ENCODE measurements at regions of chr20 and their contacts with region 1.

Region 1: DNA sequence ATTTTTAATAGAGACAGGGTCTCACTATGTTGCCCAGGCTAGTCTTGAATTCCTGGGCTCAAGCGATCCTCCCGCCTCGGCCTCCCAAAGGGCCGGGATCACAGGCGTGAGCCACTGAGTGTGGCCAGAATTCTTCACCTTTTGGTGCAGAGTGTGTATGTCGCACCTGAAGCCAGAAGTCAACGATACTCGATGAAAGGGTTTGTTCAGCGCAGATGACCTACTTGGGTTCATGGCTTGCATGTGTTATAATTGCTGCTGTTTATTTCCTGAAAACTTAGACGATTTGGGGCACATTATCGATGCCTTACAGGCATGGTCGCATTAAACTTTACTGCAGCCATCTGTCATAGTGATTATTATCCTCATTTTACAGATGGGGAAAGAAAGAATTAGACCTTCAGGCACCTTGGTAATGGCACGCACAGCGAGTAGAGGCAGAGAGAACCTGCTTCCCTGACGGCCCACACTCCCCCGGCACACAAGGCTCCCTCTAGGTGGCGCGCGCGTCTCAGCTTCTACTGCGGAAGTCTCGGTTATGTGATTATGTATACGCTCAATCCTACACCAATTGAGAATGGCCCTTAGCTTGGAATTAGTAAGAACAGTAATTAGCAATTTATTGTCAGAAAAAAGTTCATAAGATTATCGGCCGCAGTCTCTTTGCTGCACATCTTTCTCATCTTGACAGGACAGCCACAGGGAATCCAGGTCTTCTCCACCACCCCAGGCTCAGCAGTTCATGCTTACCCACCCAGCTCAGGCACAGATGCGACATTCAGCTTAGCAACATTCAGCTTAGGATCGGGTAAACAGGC is 212.8 kb upstream of the PROKR2 start:
- DNase-seq: peak; percentile 74
- ATAC-seq: peak; percentile 92
- H3K4me3 Mint-ChIP-seq: peak overlapping the region; percentile 29
- H3K27ac Mint-ChIP-seq: peak overlapping the region; percentile 46
- H3K4me1 Mint-ChIP-seq: peaks cover 11% of the 10 kb centered on the region
- H3K27me3 Mint-ChIP-seq: no peaks in the 10 kb centered on the region
- CTCF ChIP-seq: no peak

Region 2: GRCh38 chr20:5119435-5120188 is 409.9 kb before region 1 on chr20 and contains the start of gene PCNA:
- CTCF ChIA-PET with region 1: no interaction called
- POLR2A ChIA-PET with region 1: no interaction called
- intact Hi-C with region 1: no loop called
- DNase-seq: peak; percentile 91
- ATAC-seq: peak; percentile 95
- H3K4me3 Mint-ChIP-seq: peak within 1 kb of the TSS; percentile 94
- H3K27ac Mint-ChIP-seq: peak within 1 kb of the TSS; percentile 94
- H3K4me1 Mint-ChIP-seq: peaks cover 27% of the 10 kb centered on the region
- H3K27me3 Mint-ChIP-seq: no peaks in the 10 kb centered on the region
- CTCF ChIP-seq: no peak
- total RNA-seq, gene PCNA: 62.0 and 69.9 TPM in 2 replicates

Region 3: GRCh38 chr20:5513975-5514516 is 15.5 kb before region 1 on chr20:
- CTCF ChIA-PET with region 1: no interaction called
- POLR2A ChIA-PET with region 1: no interaction called
- intact Hi-C with region 1: no loop called
- DNase-seq: no peak
- ATAC-seq: no peak
- H3K4me3 Mint-ChIP-seq: no peak overlapping the region
- H3K27ac Mint-ChIP-seq: no peak overlapping the region
- H3K4me1 Mint-ChIP-seq: no peaks in the 10 kb centered on the region
- H3K27me3 Mint-ChIP-seq: no peaks in the 10 kb centered on the region
- CTCF ChIP-seq: no peak

Region 4: DNA sequence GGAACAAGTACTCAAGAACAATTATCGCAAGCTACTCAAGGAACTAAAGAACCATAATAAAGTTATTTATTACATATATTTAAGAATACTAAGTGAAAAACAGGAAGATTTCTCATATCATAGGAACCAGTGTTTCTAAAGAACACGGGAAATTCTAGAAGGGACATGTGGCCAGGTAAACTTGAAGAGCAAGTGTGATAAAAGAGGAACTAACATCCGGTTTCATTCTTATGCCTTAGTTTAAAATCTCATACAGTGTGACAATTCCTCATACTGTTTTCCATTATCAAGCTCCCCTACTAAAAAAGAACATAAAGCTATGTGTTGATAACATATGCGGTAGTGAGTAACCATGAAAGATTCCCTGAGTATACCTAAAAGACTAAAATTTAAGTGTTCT is 57.2 kb after region 1 on chr20:
- CTCF ChIA-PET with region 1: no interaction called
- POLR2A ChIA-PET with region 1: no interaction called
- intact Hi-C with region 1: no loop called
- DNase-seq: no peak
- ATAC-seq: peak; percentile 69
- H3K4me3 Mint-ChIP-seq: peak overlapping the region; percentile 20
- H3K27ac Mint-ChIP-seq: peak overlapping the region; percentile 67
- H3K4me1 Mint-ChIP-seq: peaks cover 48% of the 10 kb centered on the region
- H3K27me3 Mint-ChIP-seq: no peaks in the 10 kb centered on the region
- CTCF ChIP-seq: no peak

Region 5: DNA sequence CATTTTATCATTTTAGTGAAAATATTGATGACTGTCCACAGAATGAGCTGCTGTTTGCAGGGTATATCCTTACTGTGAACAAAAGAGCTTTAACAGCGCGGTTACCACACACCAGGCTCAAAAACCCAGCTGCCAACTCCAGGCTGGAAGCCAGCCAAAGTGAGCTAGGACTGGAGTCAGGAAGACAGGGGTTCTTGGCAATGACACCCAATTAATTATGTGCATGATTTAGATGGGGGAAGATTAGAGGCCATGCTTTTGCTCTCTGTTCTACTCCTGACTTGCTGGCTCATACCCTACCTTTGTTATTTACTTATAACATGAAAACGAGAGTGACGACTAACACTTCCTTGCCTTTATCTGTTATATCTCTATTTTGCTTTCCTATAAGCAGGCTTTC is 91.8 kb after region 1 on chr20:
- CTCF ChIA-PET with region 1: no interaction called
- POLR2A ChIA-PET with region 1: no interaction called
- intact Hi-C with region 1: no loop called
- DNase-seq: no peak
- ATAC-seq: no peak
- H3K4me3 Mint-ChIP-seq: no peak overlapping the region
- H3K27ac Mint-ChIP-seq: no peak overlapping the region
- H3K4me1 Mint-ChIP-seq: no peaks in the 10 kb centered on the region
- H3K27me3 Mint-ChIP-seq: no peaks in the 10 kb centered on the region
- CTCF ChIP-seq: no peak

Region 6: DNA sequence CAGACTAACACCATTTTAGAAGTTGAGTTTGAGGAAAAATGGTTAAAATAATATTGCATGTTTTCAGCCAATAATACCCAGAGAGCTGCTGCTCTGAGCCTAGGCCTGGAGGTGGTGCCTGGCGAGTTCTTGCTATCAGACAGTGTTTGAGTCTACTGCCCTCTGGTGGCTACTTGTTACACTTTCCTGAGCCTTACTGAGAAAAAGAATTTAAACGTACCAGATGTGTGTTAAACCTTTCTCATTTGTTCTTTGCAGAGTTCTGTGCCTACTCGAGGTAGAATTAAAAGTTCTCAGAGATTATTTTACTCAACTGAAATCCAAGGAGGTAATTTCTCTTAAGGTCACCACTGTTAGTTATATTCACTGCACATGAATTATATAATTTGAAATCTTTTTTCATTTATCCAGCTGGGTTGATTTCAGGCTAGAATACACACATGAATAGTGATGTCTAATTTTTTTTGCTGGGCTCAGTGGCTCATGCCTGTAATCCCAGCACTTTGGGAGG is 258.9 kb after region 1 on chr20:
- CTCF ChIA-PET with region 1: interaction called, 75 read pairs
- POLR2A ChIA-PET with region 1: interaction called, 3 read pairs
- intact Hi-C with region 1: loop called (anchors 1 kb)
- DNase-seq: no peak
- ATAC-seq: peak; percentile 99
- H3K4me3 Mint-ChIP-seq: no peak overlapping the region
- H3K27ac Mint-ChIP-seq: no peak overlapping the region
- H3K4me1 Mint-ChIP-seq: peaks cover 15% of the 10 kb centered on the region
- H3K27me3 Mint-ChIP-seq: no peaks in the 10 kb centered on the region
- CTCF ChIP-seq: no peak

Region 7: DNA sequence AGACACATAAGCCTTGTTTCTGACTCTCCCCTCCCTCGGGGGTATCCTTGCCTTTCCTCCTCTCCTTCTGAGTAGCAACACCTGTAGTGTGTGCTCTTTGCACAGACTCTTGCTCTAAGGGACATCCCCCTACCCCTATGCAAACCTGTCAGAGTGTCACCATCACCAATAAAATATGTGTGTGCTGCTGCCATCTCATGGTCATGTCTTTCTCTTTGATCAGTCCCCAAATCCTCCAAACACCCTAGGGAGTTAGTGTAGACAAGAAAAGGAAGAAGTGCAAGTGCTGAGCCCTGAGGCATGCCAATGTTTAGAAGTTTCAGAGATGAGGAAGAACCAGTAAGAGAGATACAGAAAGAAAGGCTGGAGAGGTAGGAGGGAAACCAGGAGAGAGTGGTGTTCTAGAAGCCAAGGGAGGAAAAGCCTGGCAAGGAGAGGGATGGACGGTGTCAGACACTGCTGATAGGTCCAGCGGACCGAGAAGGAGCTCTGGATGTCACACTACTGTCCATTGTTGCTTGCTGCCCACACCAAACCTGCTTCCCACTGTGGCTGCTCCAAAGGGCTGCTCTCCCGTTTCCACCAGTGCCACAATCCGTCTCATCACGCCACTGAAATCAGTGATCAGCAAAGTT is 404.4 kb after region 1 on chr20:
- CTCF ChIA-PET with region 1: interaction called, 8 read pairs
- POLR2A ChIA-PET with region 1: no interaction called
- intact Hi-C with region 1: loop called (anchors 1 kb)
- DNase-seq: no peak
- ATAC-seq: peak; percentile 83
- H3K4me3 Mint-ChIP-seq: no peak overlapping the region
- H3K27ac Mint-ChIP-seq: no peak overlapping the region
- H3K4me1 Mint-ChIP-seq: peaks cover 6% of the 10 kb centered on the region
- H3K27me3 Mint-ChIP-seq: peaks cover 7% of the 10 kb centered on the region
- CTCF ChIP-seq: no peak

Region 8: GRCh38 chr20:6008254-6008653 is 478.7 kb after region 1 on chr20:
- CTCF ChIA-PET with region 1: interaction called, 3 read pairs
- POLR2A ChIA-PET with region 1: no interaction called
- intact Hi-C with region 1: loop called (anchors 1 kb)
- DNase-seq: no peak
- ATAC-seq: no peak
- H3K4me3 Mint-ChIP-seq: no peak overlapping the region
- H3K27ac Mint-ChIP-seq: no peak overlapping the region
- H3K4me1 Mint-ChIP-seq: peaks cover 24% of the 10 kb centered on the region
- H3K27me3 Mint-ChIP-seq: no peaks in the 10 kb centered on the region
- CTCF ChIP-seq: no peak